ENCODE measurements at regions of chr15 and their contacts with region 1.

Region 1: DNA sequence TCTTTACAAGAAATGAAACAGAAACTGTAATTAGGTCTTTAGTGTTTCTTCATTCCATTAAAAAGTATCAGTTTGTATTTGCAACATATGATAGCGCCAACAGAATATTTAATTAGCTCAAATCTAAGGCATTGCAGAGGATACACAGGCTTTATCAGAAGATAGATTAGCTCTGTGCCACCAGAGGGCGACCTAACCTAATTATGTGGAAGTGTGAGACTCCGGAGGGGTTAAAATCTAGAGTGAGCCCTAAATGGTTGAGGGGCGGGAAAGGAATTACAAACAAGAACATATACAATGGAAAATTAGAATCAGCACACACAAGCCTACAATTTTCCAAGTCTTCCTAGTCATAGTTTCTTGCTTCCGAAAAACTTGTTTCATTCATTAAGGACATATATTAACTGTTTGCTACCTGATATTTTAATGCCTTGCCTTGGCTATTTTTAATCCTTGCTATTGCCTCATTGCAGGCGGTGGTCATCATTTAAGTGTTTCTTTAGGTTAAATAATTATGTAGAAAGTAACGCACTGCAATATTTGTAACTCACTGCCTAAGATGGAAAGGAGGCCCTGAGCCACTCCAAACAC is 18.0 kb upstream of the RYR3 start:
- DNase-seq: peak; percentile 82
- ATAC-seq: peak; percentile 79
- H3K4me3 ChIP-seq: no peak overlapping the region
- H3K27ac ChIP-seq: no peak overlapping the region
- H3K4me1 ChIP-seq: 0 out of 2 replicates have a peak, but pooled peaks cover 11% of the 10 kb centered on the region
- H3K27me3 ChIP-seq: peaks cover 13% of the 10 kb centered on the region; the same call in 1 of the 2 replicates
- CTCF ChIP-seq: peak; percentile 95

Region 2: GRCh38 chr15:33215941-33216872 is 76.6 kb before region 1 on chr15:
- CTCF ChIA-PET with region 1: no interaction called
- POLR2A ChIA-PET with region 1: no interaction called
- intact Hi-C with region 1: no loop called
- DNase-seq: peak; percentile 71
- ATAC-seq: peak; percentile 61
- H3K4me3 ChIP-seq: no peak overlapping the region
- H3K27ac ChIP-seq: no peak overlapping the region
- H3K4me1 ChIP-seq: no peaks in the 10 kb centered on the region
- H3K27me3 ChIP-seq: no peaks in the 10 kb centered on the region
- CTCF ChIP-seq: peak; percentile 63

Region 3: DNA sequence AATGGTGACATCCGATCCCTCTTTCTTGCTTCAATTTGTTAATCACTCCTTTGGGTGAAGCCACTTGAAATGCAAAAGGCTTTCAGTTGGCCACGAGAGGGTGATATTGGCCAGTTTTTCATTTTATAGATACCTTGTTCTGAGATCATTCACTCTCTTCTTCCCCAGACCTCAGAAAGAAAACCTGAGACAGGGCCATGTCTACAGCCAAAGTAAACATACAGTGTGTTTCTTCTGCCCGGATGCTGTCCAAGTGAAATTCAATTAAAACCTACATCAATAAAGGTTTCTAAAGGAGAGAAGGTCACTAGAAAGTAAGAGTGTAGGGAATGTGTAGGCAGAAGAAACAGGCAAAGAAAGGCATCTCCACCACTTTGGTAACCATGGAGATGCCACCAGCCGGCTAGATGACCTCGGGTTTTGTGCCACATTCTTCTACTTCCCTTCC is 58.8 kb before region 1 on chr15:
- CTCF ChIA-PET with region 1: no interaction called
- POLR2A ChIA-PET with region 1: no interaction called
- intact Hi-C with region 1: loop called (anchors 2 kb)
- DNase-seq: peak; percentile 80
- ATAC-seq: peak; percentile 90
- H3K4me3 ChIP-seq: no peak overlapping the region
- H3K27ac ChIP-seq: no peak overlapping the region
- H3K4me1 ChIP-seq: peaks cover 15% of the 10 kb centered on the region
- H3K27me3 ChIP-seq: 0 out of 2 replicates have a peak, but pooled peaks cover 2% of the 10 kb centered on the region
- CTCF ChIP-seq: peak; percentile 92

Region 4: DNA sequence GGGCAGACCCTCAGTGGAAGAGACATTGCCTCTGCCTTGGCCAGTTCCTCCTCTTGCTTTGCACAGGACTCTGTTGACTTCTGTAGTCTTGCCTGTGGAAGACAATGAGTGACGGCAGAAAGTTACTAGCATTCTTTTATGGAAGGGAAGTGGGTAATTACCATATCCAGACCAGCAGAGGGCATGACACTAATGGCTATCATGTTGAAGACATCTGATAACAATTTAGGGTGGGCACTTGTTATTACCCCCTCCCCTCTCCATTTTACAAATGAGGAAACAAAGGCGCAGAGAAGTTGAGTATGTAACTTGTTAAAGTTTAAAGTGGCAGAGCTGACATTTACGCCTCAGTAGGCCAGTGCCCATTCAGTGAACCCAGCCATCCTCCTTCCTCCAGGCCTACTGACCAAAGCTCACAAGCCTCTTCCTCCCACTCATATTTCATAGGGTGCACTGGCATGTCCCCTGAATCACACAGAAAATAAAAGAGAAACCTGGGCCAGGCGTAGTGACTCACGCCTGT is 50.1 kb before region 1 on chr15:
- CTCF ChIA-PET with region 1: interaction called, 3 read pairs
- POLR2A ChIA-PET with region 1: no interaction called
- intact Hi-C with region 1: loop called (anchors 2 kb)
- DNase-seq: peak; percentile 62
- ATAC-seq: peak; percentile 30
- H3K4me3 ChIP-seq: no peak overlapping the region; the same call in 1 of the 2 replicates
- H3K27ac ChIP-seq: peak overlapping the region; percentile 95
- H3K4me1 ChIP-seq: peaks cover 39% of the 10 kb centered on the region
- H3K27me3 ChIP-seq: 0 out of 2 replicates have a peak, but pooled peaks cover 6% of the 10 kb centered on the region
- CTCF ChIP-seq: peak; percentile 79

Region 5: GRCh38 chr15:33608714-33609113 is 315.9 kb after region 1 on chr15:
- CTCF ChIA-PET with region 1: no interaction called
- POLR2A ChIA-PET with region 1: no interaction called
- intact Hi-C with region 1: loop called (anchors 2 kb)
- DNase-seq: peak; percentile 48
- ATAC-seq: no peak
- H3K4me3 ChIP-seq: no peak overlapping the region
- H3K27ac ChIP-seq: no peak overlapping the region
- H3K4me1 ChIP-seq: no peaks in the 10 kb centered on the region
- H3K27me3 ChIP-seq: peaks cover 59% of the 10 kb centered on the region
- CTCF ChIP-seq: peak; percentile 59

Region 6: GRCh38 chr15:33700695-33701304 is 408.0 kb after region 1 on chr15:
- CTCF ChIA-PET with region 1: interaction called, 47 read pairs
- POLR2A ChIA-PET with region 1: no interaction called
- intact Hi-C with region 1: loop called (anchors 1 kb)
- DNase-seq: peak; percentile 84
- ATAC-seq: peak; percentile 97
- H3K4me3 ChIP-seq: no peak overlapping the region
- H3K27ac ChIP-seq: no peak overlapping the region
- H3K4me1 ChIP-seq: no peaks in the 10 kb centered on the region
- H3K27me3 ChIP-seq: peaks cover 30% of the 10 kb centered on the region
- CTCF ChIP-seq: peak; percentile 90

Region 7: GRCh38 chr15:33729653-33730052 is 436.8 kb after region 1 on chr15:
- CTCF ChIA-PET with region 1: interaction called, 15 read pairs
- POLR2A ChIA-PET with region 1: no interaction called
- intact Hi-C with region 1: loop called (anchors 1 kb)
- DNase-seq: peak; percentile 79
- ATAC-seq: peak; percentile 71
- H3K4me3 ChIP-seq: no peak overlapping the region
- H3K27ac ChIP-seq: no peak overlapping the region
- H3K4me1 ChIP-seq: no peaks in the 10 kb centered on the region
- H3K27me3 ChIP-seq: no peaks in the 10 kb centered on the region
- CTCF ChIP-seq: peak; percentile 72